Left cardiac atrium (tissue), 4 donors: ENCODE measurements at regions of chr3 and their contacts with region 1.

Region 1: DNA sequence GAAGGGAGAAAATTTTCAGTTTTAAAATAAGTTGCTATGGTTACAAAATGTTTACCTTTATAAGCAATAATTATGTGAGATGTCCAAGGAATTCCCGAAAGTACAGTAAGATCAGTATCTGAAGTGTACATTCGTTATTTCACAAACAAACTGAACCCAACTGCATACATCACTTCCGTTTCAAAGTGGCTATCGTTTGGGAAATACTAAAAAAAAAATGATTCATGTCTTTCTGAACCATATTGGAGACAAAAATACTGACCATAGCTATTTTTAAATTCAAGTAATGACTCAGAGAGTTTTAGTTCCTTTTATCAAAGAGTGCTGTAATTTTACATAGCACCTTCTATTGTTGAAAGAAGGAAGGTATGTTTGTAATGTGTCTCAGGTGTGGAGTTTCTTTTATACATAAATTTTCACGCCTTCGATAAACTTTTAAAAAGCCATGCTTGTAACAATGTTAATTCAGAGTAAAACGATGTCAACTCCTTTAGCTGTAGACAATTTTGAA is 8.0 kb upstream of the ANKRD28 start:
- DNase-seq: no peak
- ATAC-seq: peak; percentile 30 to 48

Region 2: GRCh38 chr3:15205934-15206661 is 599.7 kb before region 1 on chr3 and contains the start of gene CAPN7:
- intact Hi-C with region 1: no loop called
- DNase-seq: peak; percentile 97
- ATAC-seq: peak; percentile 98 to 99
- total RNA-seq, gene CAPN7: 28.4 to 28.9 TPM

Region 3: DNA sequence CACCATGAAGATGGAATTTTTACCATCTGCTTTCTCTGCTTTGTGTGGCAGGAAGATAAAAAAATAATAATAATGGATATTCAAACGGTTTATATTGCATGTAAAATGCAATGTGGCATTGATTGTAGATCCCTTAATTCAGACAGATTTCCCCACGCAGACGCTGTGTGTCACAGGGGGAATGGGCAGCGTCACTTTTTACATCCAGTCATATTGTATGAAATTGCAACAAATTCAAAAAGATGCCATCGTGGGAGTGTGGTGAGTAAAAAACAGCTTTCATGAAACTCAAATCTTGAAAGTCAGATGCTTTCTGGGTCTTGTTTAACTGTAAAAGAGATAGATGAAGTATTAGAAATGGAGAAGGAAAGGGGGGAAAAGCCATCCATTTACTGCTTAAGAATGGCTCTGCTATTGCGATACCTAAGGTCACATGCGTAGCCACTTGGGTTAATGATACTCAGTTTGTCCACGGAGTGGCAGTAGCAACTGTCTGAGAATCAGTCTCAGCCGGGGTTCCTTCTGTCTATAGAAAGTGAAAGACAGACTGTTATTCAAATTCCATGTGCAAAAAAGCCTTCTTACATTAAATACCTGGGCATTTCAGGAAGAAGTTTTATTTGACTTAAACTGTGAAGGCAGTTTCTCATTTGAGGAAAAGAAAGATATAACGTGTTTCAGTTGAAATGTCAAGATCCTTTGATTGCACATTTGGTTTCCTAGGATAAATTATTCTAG is 175.8 kb before region 1 on chr3:
- intact Hi-C with region 1: loop called (anchors 2 to 5 kb)
- DNase-seq: peak; percentile 47
- ATAC-seq: peak; percentile 93 to 94

Region 4: GRCh38 chr3:15839568-15839967 is 33.8 kb after region 1 on chr3:
- intact Hi-C with region 1: no loop called
- DNase-seq: no peak
- ATAC-seq: no peak

Region 5: DNA sequence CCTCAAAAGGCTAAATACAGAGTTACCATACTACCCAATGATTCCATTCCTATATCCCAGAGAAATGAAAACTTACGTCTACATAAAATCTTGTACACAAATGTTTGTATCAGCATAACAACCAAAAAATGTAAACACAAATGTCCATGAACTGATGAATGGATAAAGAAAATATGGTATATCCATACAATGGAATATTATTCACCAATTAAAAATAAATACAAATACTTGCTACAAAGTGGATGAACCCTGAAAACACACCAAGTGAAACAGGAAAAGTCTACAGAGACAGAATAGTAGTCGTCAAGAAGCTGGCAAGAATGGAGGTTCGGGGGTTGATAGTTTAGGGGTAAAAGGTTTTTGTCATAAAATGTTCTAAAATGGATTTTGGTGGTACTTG is 45.9 kb after region 1 on chr3:
- intact Hi-C with region 1: no loop called
- DNase-seq: no peak
- ATAC-seq: no peak